ENCODE measurements at regions of chr7 and their contacts with region 1.

Region 1: DNA sequence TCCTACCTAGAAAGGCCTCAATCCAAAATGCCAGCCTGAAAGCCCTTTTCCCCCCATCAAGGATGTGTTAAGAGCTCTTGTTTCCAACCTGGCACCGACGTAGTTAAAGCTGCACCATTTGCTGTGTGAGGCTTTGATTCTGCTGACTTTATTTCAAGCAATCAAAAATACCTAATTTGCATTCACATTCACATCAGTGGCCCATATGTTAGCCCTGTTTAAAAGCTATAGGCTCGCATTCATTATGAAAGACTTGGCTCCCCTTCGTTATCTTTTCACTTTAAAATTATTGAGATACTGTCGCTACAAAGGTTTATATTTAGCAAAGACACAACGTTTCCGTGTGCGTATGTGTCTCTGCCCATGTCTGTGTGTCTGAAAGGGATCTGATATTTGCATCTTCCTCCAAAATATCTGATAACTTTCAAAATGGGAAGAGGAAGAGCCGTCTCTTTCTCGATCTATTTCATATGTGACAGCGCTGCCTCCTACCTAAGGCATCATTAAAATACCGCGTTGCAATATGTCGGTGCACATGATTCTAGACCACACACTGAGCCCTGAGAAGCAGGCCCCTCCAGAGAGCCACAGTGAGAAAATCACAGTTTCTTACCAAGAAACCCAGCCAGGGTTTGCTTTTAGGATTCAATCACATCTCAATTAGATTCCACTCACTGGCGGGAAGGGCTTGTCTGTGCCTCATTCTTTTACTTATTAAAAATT is 57.1 kb upstream of the ITPRID1 start:
- DNase-seq: no peak
- H3K4me3 ChIP-seq: no peak overlapping the region
- H3K27ac ChIP-seq: no peak overlapping the region
- H3K4me1 ChIP-seq: no peaks in the 10 kb centered on the region
- H3K27me3 ChIP-seq: no peaks in the 10 kb centered on the region
- CTCF ChIP-seq: no peak
- POLR2A ChIP-seq: no peak

Region 2: GRCh38 chr7:31043051-31043471 is 413.7 kb before region 1 on chr7:
- intact Hi-C with region 1: loop called (anchors 5 kb)
- DNase-seq: no peak
- H3K4me3 ChIP-seq: no peak overlapping the region
- H3K27ac ChIP-seq: no peak overlapping the region
- H3K4me1 ChIP-seq: no peaks in the 10 kb centered on the region
- H3K27me3 ChIP-seq: no peaks in the 10 kb centered on the region
- CTCF ChIP-seq: no peak
- POLR2A ChIP-seq: no peak

Region 3: DNA sequence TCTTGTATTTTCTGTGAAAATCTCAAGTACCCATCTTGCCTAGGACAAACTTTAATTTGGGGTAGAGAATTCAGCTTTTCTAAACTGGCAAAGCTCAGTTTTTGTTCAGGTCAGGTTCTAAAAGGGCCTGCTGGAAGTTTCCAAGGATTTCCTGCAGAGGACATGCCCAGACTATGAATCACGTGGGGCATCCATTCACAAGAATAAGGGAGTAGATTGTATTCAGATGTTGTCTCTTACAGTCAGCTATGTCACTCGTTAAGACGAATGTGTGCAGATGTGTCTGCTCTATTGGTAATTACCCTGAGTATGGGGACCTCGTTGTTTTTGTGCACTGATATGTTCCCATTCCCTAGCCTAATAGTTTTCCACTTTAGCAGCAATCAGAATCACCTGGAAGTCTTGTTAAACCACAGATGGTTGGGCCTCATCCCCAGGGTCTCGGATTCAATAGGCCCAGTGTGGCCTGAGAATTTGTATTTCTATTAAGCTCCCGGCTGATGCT is 23.9 kb before region 1 on chr7:
- intact Hi-C with region 1: loop called (anchors 2 kb)
- DNase-seq: no peak
- H3K4me3 ChIP-seq: no peak overlapping the region
- H3K27ac ChIP-seq: no peak overlapping the region
- H3K4me1 ChIP-seq: no peaks in the 10 kb centered on the region
- H3K27me3 ChIP-seq: no peaks in the 10 kb centered on the region
- CTCF ChIP-seq: no peak
- POLR2A ChIP-seq: no peak